ENCODE measurements at regions of chr4 and their contacts with region 1.

Region 1: GRCh38 chr4:15396157-15396800 is 31.6 kb upstream of the C1QTNF7 start:
- DNase-seq: peak; percentile 5 to 69 (median 43)
- ATAC-seq: peak; percentile 85
- H3K4me3 ChIP-seq: no peak overlapping the region
- H3K4me3 Mint-ChIP-seq: no peak overlapping the region
- H3K27ac ChIP-seq: no peak overlapping the region
- H3K27ac Mint-ChIP-seq: no peak overlapping the region
- H3K4me1 ChIP-seq: peaks cover 16% of the 10 kb centered on the region
- H3K4me1 Mint-ChIP-seq: peaks cover 29% of the 10 kb centered on the region
- H3K27me3 ChIP-seq: no peaks in the 10 kb centered on the region
- H3K27me3 Mint-ChIP-seq: no peaks in the 10 kb centered on the region
- CTCF ChIP-seq: peak; percentile 72

Region 2: GRCh38 chr4:14404730-14405129 is 991.5 kb before region 1 on chr4:
- CTCF ChIA-PET with region 1: no interaction called
- POLR2A ChIA-PET with region 1: no interaction called
- intact Hi-C with region 1: no loop called
- DNase-seq: no peak
- ATAC-seq: no peak
- H3K4me3 ChIP-seq: no peak overlapping the region
- H3K4me3 Mint-ChIP-seq: no peak overlapping the region
- H3K27ac ChIP-seq: no peak overlapping the region
- H3K27ac Mint-ChIP-seq: no peak overlapping the region
- H3K4me1 ChIP-seq: no peaks in the 10 kb centered on the region
- H3K4me1 Mint-ChIP-seq: no peaks in the 10 kb centered on the region
- H3K27me3 ChIP-seq: no peaks in the 10 kb centered on the region
- H3K27me3 Mint-ChIP-seq: no peaks in the 10 kb centered on the region
- CTCF ChIP-seq: no peak

Region 3: GRCh38 chr4:15231265-15232091 is 164.8 kb before region 1 on chr4:
- CTCF ChIA-PET with region 1: interaction called, 9 read pairs
- POLR2A ChIA-PET with region 1: no interaction called
- intact Hi-C with region 1: loop called (anchors 1 kb)
- DNase-seq: peak; percentile 38 to 83 (median 71)
- ATAC-seq: peak; percentile 81
- H3K4me3 ChIP-seq: no peak overlapping the region
- H3K4me3 Mint-ChIP-seq: no peak overlapping the region
- H3K27ac ChIP-seq: no peak overlapping the region
- H3K27ac Mint-ChIP-seq: no peak overlapping the region
- H3K4me1 ChIP-seq: peaks cover 29% of the 10 kb centered on the region
- H3K4me1 Mint-ChIP-seq: peaks cover 31% of the 10 kb centered on the region
- H3K27me3 ChIP-seq: no peaks in the 10 kb centered on the region
- H3K27me3 Mint-ChIP-seq: no peaks in the 10 kb centered on the region
- CTCF ChIP-seq: peak; percentile 71

Region 4: DNA sequence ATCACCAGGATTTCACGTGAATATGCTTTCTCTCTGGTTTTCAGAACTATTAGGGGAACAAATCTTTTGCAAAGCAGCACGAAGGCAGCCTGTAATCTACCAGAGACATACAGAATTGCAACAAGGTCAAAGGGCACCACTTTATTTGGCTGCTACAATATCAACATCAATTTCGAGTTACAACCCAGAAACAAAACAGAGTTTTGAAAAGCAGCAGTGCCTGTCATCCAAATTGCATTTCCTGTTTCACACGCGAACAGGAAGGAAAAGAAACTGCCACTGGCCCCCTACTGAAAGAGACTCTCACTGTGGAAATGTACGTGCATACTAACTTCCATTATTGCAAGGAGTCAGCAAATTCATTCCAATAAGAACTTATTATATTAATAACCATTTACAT is 14.5 kb after region 1 on chr4:
- CTCF ChIA-PET with region 1: interaction called, 6 read pairs
- POLR2A ChIA-PET with region 1: no interaction called
- intact Hi-C with region 1: loop called in 1 of 2 experiments (anchors 1 kb)
- DNase-seq: peak in 5 of 9 experiments; percentile 6 to 59 (median 28)
- ATAC-seq: peak; percentile 62
- H3K4me3 ChIP-seq: peak overlapping the region in 1 of 2 experiments; percentile 55
- H3K4me3 Mint-ChIP-seq: peak overlapping the region; percentile 79
- H3K27ac ChIP-seq: peak overlapping the region; percentile 42 to 56
- H3K27ac Mint-ChIP-seq: peak overlapping the region; percentile 90
- H3K4me1 ChIP-seq: peaks cover 42% of the 10 kb centered on the region
- H3K4me1 Mint-ChIP-seq: peaks cover 51% of the 10 kb centered on the region
- H3K27me3 ChIP-seq: no peaks in the 10 kb centered on the region
- H3K27me3 Mint-ChIP-seq: no peaks in the 10 kb centered on the region
- CTCF ChIP-seq: no peak

Measured in CD8-positive, alpha-beta T cell (primary cell).